ENCODE measurements at regions of chr4 and their contacts with region 1.

Region 1: DNA sequence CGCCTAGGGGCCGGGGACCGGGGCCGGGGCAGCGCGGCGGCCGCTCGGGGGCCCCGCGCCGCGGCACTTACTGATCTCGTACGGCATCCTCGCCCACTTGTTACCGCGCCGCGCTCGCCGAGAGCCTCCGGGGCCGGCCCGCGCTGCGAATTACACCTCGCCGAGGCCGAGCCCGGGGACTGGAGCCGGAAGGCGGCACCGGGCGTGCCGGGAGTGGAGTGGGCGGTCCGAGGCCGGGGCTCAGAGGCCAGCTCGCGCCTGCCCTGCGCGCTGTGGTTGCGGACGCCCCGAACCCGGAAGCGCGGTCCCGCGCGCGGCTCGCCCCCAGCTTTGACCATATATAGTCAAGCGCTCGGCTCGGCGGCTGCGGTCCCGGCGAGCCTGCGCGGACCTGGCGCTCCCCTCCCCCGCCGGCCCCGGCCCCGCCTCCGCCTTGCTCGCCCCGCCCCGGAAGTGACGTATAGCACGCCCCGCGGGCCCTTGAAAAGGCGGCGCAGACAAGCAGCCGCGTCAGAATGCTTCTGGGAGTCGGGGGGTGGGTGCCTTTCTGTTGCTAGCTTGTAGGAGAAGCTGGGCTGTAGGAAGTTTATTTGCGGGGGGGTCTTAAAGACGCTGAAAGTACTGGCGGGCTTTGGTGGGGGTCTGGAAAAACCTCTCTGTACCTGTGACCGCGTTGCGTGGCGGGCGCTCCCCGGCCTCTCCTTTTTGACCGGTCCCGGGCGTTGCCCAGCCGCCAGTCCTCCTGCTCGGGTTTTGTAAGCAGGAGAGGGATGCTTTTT is at the start of gene WDR1:
- DNase-seq: peak; percentile 91 to 98 (median 92)
- ATAC-seq: peak; percentile 95
- H3K4me3 ChIP-seq: peak within 1 kb of the TSS; percentile 72
- H3K27ac ChIP-seq: peak within 1 kb of the TSS; percentile 89
- H3K4me1 ChIP-seq: peaks cover 19 to 24% of the 10 kb centered on the region in 2 experiments
- H3K27me3 ChIP-seq: no peaks in the 10 kb centered on the region
- CTCF ChIP-seq: no peak
- EP300 ChIP-seq: no peak
- POLR2A ChIP-seq: peak; percentile 99
- RAD21 ChIP-seq: no peak; a peak in 2 of 4 replicates
- polyA plus RNA-seq, gene WDR1: 16.1 to 23.0 TPM

Region 2: DNA sequence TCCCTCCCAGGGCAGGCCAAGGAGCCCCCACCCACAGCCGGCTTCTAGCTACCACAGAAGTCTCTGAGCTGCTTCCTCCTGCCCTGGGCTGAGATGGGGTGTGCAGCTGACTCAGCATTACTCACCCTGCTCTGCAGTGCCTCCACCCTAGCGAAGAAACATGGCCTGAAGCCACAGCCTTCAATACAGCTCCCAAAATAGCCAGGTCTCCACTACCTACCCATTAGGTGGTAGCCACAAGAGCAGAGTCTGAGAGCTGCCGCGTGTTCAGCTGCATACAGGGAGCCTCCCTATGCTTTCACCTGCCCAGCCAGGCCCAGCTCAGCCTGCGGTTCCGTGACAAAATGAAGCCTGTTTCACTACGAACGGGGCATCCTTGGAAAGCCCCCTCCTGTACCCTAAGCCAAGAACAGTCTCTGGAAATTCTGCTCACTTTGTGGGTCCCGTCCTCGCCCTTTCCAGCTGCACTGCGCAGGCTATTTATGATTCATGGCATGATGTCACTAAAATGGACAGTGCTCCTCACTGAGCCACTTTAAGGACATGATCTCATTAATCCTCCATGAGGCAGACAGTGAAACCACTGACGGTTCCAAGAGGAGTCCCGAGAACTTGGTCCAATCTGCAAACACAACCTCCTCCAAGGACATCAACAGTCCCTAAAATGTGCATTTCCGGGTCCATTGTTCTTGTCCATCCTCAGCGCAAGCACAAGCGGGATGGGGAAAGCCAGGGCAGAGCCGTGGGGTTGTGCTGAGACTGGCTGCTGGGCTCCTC is 20.4 kb before region 1 on chr4:
- CTCF ChIA-PET with region 1: no interaction called
- POLR2A ChIA-PET with region 1: interaction called, 64 read pairs
- in situ Hi-C with region 1: no loop called
- intact Hi-C with region 1: no loop called
- DNase-seq: peak; percentile 60 to 78 (median 70)
- ATAC-seq: peak; percentile 62
- H3K4me3 ChIP-seq: no peak overlapping the region
- H3K27ac ChIP-seq: peak overlapping the region; percentile 73; the same call in 2 of the 3 replicates
- H3K4me1 ChIP-seq: peaks cover 12 to 28% of the 10 kb centered on the region in 2 experiments; a peak in 4 of 5 replicates
- H3K27me3 ChIP-seq: no peaks in the 10 kb centered on the region
- CTCF ChIP-seq: no peak
- EP300 ChIP-seq: no peak
- POLR2A ChIP-seq: no peak; the same call in 1 of the 2 replicates
- RAD21 ChIP-seq: no peak

Region 3: DNA sequence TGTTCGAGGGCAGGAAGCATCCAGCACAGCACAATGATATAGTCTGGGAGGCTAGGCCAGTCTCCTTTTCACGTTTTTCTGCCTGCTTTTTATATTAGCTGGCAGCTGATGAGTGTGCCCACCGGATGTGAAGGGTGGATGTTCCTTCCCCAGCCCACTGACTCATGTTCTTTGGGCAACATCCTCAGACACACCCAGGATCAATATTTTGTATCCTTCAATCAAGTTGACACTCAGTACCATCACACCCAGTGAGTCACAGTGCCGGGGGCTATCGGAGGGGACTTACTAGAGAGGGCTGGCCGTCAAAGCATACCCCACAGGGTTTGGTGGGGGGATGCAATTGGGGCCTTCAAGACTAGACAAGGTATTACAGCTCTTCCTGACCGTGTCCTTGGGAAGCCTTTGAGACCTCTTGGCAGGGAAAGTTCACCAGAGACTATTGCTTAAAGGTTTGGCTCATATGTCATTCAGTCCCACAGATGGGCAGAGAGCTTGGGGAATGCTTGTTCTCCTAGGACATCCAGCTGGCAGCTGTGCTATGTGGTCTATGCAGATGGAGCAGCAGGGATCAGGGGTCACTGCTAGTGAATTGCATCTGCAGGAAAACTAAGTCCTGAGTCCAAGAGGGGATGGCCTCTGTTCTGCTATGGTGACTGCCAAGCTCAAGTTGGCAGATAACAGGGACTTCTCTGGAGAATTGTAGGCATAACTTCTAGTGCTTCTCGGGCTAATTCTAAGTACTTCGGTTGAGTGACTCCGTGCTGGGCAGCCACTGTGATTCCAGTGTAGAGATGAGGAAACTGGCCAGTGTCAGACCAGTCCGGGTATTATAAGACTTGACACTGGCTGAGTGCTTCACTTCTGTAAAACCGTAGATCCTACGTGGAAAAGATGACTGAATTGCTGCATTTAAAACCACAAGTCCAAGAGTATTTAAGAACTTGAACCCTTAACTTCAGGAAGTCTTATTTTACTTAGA is 12.7 kb after region 1 on chr4:
- CTCF ChIA-PET with region 1: no interaction called
- POLR2A ChIA-PET with region 1: interaction called, 216 read pairs
- in situ Hi-C with region 1: no loop called
- intact Hi-C with region 1: no loop called
- DNase-seq: no peak
- ATAC-seq: no peak
- H3K4me3 ChIP-seq: no peak overlapping the region
- H3K27ac ChIP-seq: no peak overlapping the region
- H3K4me1 ChIP-seq: no peaks in the 10 kb centered on the region; a peak in 1 of 5 replicates
- H3K27me3 ChIP-seq: peaks cover 31 to 68% of the 10 kb centered on the region in 2 experiments; a peak in 4 of 5 replicates
- CTCF ChIP-seq: no peak
- EP300 ChIP-seq: no peak
- POLR2A ChIP-seq: no peak
- RAD21 ChIP-seq: no peak

Region 4: GRCh38 chr4:10151182-10151581 is 34.4 kb after region 1 on chr4:
- CTCF ChIA-PET with region 1: no interaction called
- POLR2A ChIA-PET with region 1: interaction called, 25 read pairs
- in situ Hi-C with region 1: no loop called
- intact Hi-C with region 1: no loop called
- DNase-seq: no peak
- ATAC-seq: no peak
- H3K4me3 ChIP-seq: no peak overlapping the region
- H3K27ac ChIP-seq: no peak overlapping the region
- H3K4me1 ChIP-seq: no peaks in the 10 kb centered on the region
- H3K27me3 ChIP-seq: peaks cover 7 to 38% of the 10 kb centered on the region in 2 experiments; a peak in 4 of 5 replicates
- CTCF ChIP-seq: no peak
- EP300 ChIP-seq: no peak
- POLR2A ChIP-seq: no peak
- RAD21 ChIP-seq: no peak

Region 5: GRCh38 chr4:10173037-10173753 is 56.4 kb after region 1 on chr4:
- CTCF ChIA-PET with region 1: no interaction called
- POLR2A ChIA-PET with region 1: interaction called, 65 read pairs
- in situ Hi-C with region 1: no loop called
- intact Hi-C with region 1: no loop called
- DNase-seq: peak; percentile 83 to 96 (median 86)
- ATAC-seq: peak; percentile 90
- H3K4me3 ChIP-seq: no peak overlapping the region; the same call in 1 of the 2 replicates
- H3K27ac ChIP-seq: peak overlapping the region; percentile 93
- H3K4me1 ChIP-seq: peaks cover 27 to 76% of the 10 kb centered on the region in 2 experiments
- H3K27me3 ChIP-seq: no peaks in the 10 kb centered on the region
- CTCF ChIP-seq: peak; percentile 90 to 97 (median 92)
- EP300 ChIP-seq: peak; percentile 95
- POLR2A ChIP-seq: no peak
- RAD21 ChIP-seq: peak; percentile 89 to 90

Region 6: DNA sequence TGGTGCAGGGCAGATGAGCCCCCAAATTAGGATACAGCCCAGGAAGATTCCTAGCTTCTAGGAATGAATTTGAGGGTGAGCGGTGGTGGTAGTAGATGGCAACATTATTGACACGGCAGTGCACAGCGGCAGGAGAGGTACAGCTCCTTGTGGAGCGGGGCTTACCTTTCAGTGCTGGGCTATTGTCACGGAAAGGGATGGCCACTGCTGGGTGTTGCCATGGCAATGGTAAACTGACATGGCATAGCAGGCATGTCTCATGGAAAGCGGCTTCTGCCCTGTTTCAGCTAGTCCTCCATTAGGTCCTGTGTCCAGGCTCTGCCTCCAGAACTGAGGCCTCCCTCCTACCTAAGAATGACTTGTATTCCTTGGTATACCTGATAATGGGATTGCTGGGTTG is 81.6 kb after region 1 on chr4:
- CTCF ChIA-PET with region 1: no interaction called
- POLR2A ChIA-PET with region 1: interaction called, 14 read pairs
- in situ Hi-C with region 1: no loop called
- intact Hi-C with region 1: no loop called
- DNase-seq: no peak
- ATAC-seq: no peak
- H3K4me3 ChIP-seq: no peak overlapping the region
- H3K27ac ChIP-seq: peak overlapping the region; percentile 55
- H3K4me1 ChIP-seq: peaks cover 22 to 60% of the 10 kb centered on the region in 2 experiments
- H3K27me3 ChIP-seq: no peaks in the 10 kb centered on the region
- CTCF ChIP-seq: no peak
- EP300 ChIP-seq: no peak
- POLR2A ChIP-seq: no peak
- RAD21 ChIP-seq: no peak

Measured in K562 (cell line).